Mammary epithelial cell (primary cell): ENCODE measurements at regions of chr10 and their contacts with region 1.

Region 1: GRCh38 chr10:4678023-4678950 is 147.7 kb upstream of the AKR1E2 start:
- DNase-seq: peak; percentile 94
- H3K4me3 ChIP-seq: peak overlapping the region in 2 of 3 experiments; percentile 46 to 61
- H3K27ac ChIP-seq: peak overlapping the region; percentile 100
- H3K4me1 ChIP-seq: peaks cover 43% of the 10 kb centered on the region
- H3K27me3 ChIP-seq: no peaks in the 10 kb centered on the region
- CTCF ChIP-seq: no peak

Region 2: GRCh38 chr10:3805791-3806461 is 872.4 kb before region 1 on chr10:
- CTCF ChIA-PET with region 1: no interaction called
- dilution Hi-C with region 1: loop called (anchors 5 kb)
- in situ Hi-C with region 1: no loop called
- intact Hi-C with region 1: no loop called
- DNase-seq: peak; percentile 90
- H3K4me3 ChIP-seq: no peak overlapping the region
- H3K27ac ChIP-seq: peak overlapping the region; percentile 100
- H3K4me1 ChIP-seq: peaks cover 49% of the 10 kb centered on the region
- H3K27me3 ChIP-seq: no peaks in the 10 kb centered on the region
- CTCF ChIP-seq: no peak

Region 3: GRCh38 chr10:3873728-3874461 is 804.4 kb before region 1 on chr10:
- CTCF ChIA-PET with region 1: no interaction called
- dilution Hi-C with region 1: no loop called
- in situ Hi-C with region 1: no loop called
- intact Hi-C with region 1: no loop called
- DNase-seq: peak; percentile 71
- H3K4me3 ChIP-seq: no peak overlapping the region
- H3K27ac ChIP-seq: peak overlapping the region; percentile 62
- H3K4me1 ChIP-seq: peaks cover 10% of the 10 kb centered on the region
- H3K27me3 ChIP-seq: no peaks in the 10 kb centered on the region
- CTCF ChIP-seq: no peak

Region 4: GRCh38 chr10:3911713-3912442 is 766.4 kb before region 1 on chr10:
- CTCF ChIA-PET with region 1: no interaction called
- dilution Hi-C with region 1: no loop called
- in situ Hi-C with region 1: no loop called
- intact Hi-C with region 1: loop called (anchors 10 kb)
- DNase-seq: peak; percentile 85
- H3K4me3 ChIP-seq: peak overlapping the region; percentile 25 to 38 (median 32)
- H3K27ac ChIP-seq: peak overlapping the region; percentile 93
- H3K4me1 ChIP-seq: peaks cover 14% of the 10 kb centered on the region
- H3K27me3 ChIP-seq: no peaks in the 10 kb centered on the region
- CTCF ChIP-seq: no peak

Region 5: GRCh38 chr10:4319870-4320367 is 358.4 kb before region 1 on chr10:
- CTCF ChIA-PET with region 1: no interaction called
- dilution Hi-C with region 1: no loop called
- in situ Hi-C with region 1: no loop called
- intact Hi-C with region 1: no loop called
- DNase-seq: no peak
- H3K4me3 ChIP-seq: no peak overlapping the region
- H3K27ac ChIP-seq: no peak overlapping the region
- H3K4me1 ChIP-seq: peaks cover 8% of the 10 kb centered on the region
- H3K27me3 ChIP-seq: no peaks in the 10 kb centered on the region
- CTCF ChIP-seq: no peak

Region 6: DNA sequence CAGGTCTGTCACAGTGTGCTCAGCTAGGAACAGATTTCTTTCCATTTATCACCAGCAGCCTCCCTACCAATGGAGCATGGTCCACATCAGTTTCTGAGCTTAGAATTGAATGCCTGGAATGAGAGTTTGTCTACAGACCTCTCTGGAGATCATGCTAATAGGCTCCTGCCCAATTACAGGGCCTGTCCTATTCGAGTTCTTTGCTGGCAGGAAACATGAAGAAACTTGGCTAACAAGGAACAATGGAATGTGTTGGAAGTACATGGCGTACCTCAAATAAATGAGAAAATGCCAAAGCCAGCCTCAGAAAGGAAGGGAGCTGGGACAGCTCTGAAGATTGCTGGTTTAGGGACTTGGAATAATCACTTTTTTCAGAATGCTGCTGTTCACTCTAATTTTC is 38.3 kb before region 1 on chr10:
- CTCF ChIA-PET with region 1: no interaction called
- dilution Hi-C with region 1: no loop called
- in situ Hi-C with region 1: no loop called
- intact Hi-C with region 1: no loop called
- DNase-seq: no peak
- H3K4me3 ChIP-seq: no peak overlapping the region
- H3K27ac ChIP-seq: no peak overlapping the region
- H3K4me1 ChIP-seq: peaks cover 13% of the 10 kb centered on the region
- H3K27me3 ChIP-seq: no peaks in the 10 kb centered on the region
- CTCF ChIP-seq: no peak

Region 7: DNA sequence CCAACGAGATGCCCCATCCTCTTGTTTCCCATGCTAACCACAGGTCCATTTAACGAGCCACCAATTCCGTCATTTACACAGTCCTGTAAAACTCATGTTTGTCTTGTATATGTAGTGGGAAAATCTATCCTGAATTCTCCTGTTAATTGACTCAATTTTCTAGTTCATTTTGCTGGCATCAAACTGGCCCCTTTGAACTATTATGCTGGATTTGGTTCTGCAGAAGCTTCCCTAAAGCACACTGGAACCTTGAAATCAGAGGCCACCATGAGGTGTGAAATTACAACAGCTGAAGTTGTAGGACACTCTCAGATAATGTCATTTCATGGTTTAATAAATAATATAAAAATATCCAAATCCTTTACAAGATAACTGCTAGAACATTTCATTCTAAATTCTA is 17.9 kb after region 1 on chr10:
- CTCF ChIA-PET with region 1: interaction called, 16 read pairs
- dilution Hi-C with region 1: no loop called
- in situ Hi-C with region 1: no loop called
- intact Hi-C with region 1: no loop called
- DNase-seq: no peak
- H3K4me3 ChIP-seq: no peak overlapping the region
- H3K27ac ChIP-seq: no peak overlapping the region
- H3K4me1 ChIP-seq: peaks cover 17% of the 10 kb centered on the region
- H3K27me3 ChIP-seq: no peaks in the 10 kb centered on the region
- CTCF ChIP-seq: no peak

Region 8: GRCh38 chr10:5710859-5711258 is 1032.6 kb after region 1 on chr10:
- CTCF ChIA-PET with region 1: no interaction called
- dilution Hi-C with region 1: no loop called
- in situ Hi-C with region 1: no loop called
- intact Hi-C with region 1: no loop called
- DNase-seq: no peak
- H3K4me3 ChIP-seq: peak overlapping the region; percentile 17 to 62 (median 41)
- H3K27ac ChIP-seq: peak overlapping the region; percentile 47
- H3K4me1 ChIP-seq: no peaks in the 10 kb centered on the region
- H3K27me3 ChIP-seq: no peaks in the 10 kb centered on the region
- CTCF ChIP-seq: no peak